ENCODE measurements at regions of chrX and their contacts with region 1.

Region 1: GRCh38 chrX:53481816-53482465 is 47.8 kb upstream of the HSD17B10 start:
- DNase-seq: no peak
- H3K4me3 ChIP-seq: no peak overlapping the region
- H3K27me3 ChIP-seq: no peaks in the 10 kb centered on the region
- CTCF ChIP-seq: peak; percentile 78

Region 2: GRCh38 chrX:53458082-53458481 is 23.9 kb before region 1 on chrX:
- CTCF ChIA-PET with region 1: interaction called, 30 read pairs
- POLR2A ChIA-PET with region 1: no interaction called
- DNase-seq: no peak
- H3K4me3 ChIP-seq: no peak overlapping the region
- H3K27me3 ChIP-seq: no peaks in the 10 kb centered on the region
- CTCF ChIP-seq: no peak

Region 3: GRCh38 chrX:53471346-53471745 is 10.6 kb before region 1 on chrX:
- CTCF ChIA-PET with region 1: interaction called, 17 read pairs
- POLR2A ChIA-PET with region 1: no interaction called
- DNase-seq: no peak
- H3K4me3 ChIP-seq: no peak overlapping the region
- H3K27me3 ChIP-seq: no peaks in the 10 kb centered on the region; the same call in 1 of the 2 replicates
- CTCF ChIP-seq: no peak

Region 4: GRCh38 chrX:53494436-53494835 is 12.5 kb after region 1 on chrX:
- CTCF ChIA-PET with region 1: interaction called, 19 read pairs
- POLR2A ChIA-PET with region 1: no interaction called
- DNase-seq: no peak
- H3K4me3 ChIP-seq: no peak overlapping the region
- H3K27me3 ChIP-seq: no peaks in the 10 kb centered on the region
- CTCF ChIP-seq: no peak